ENCODE measurements at regions of chr5 and their contacts with region 1.

Region 1: GRCh38 chr5:141811287-141812155 is 66.7 kb downstream of the PCDH1 start:
- DNase-seq: no peak
- ATAC-seq: peak in 3 of 4 donors; percentile 25 to 47 (median 36)
- H3K4me3 ChIP-seq: no peak overlapping the region
- H3K27ac ChIP-seq: no peak overlapping the region
- H3K4me1 ChIP-seq: no peaks in the 10 kb centered on the region
- H3K27me3 ChIP-seq: no peaks in the 10 kb centered on the region
- CTCF ChIP-seq: peak; percentile 20 to 41 (median 36)
- POLR2A ChIP-seq: no peak

Region 2: DNA sequence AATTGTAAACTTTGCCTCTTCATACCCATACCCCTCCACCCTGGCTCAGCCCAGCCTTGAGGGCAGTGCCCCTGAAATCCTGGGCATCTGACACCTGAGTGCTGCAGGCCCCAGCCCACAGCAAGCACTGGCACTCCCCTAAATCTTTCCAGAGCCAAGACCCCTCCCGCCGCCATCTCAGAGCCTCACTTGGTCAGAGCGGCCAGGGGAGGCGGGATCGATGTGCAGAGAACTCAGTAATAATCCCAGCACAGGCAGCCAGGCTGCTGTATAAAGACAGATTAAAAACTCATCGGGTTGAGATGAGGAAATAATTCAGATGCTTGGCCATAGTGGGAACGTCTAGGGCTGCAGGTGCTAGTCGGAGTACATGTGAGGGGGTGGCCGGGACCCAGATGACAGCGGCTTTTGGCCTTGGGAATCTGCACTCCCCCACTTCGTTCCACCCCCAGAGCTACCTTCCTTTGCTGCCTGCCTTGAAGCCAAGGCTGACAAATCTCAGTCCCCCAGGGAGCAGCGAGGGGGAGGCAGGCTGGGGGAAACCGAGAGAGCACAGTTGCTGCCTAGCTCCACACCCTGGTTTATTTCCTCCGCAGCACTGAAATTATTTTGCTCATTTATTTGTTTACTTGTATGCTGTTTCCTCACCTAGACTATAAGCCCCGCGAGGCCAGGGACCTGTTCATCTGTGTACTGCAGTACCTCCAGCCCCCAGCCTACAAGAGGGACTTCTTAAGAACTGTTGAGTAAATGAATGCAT is 110.0 kb before region 1 on chr5:
- intact Hi-C with region 1: loop called in 1 of 2 experiments (anchors 10 kb)
- DNase-seq: no peak
- ATAC-seq: no peak
- H3K4me3 ChIP-seq: no peak overlapping the region
- H3K27ac ChIP-seq: no peak overlapping the region
- H3K4me1 ChIP-seq: peaks cover 0 to 8% (median 0%) of the 10 kb centered on the region in 4 donors
- H3K27me3 ChIP-seq: no peaks in the 10 kb centered on the region
- CTCF ChIP-seq: no peak
- POLR2A ChIP-seq: no peak